GM12878 (cell line): ENCODE measurements at regions of chr2 and their contacts with region 1.

Region 1: DNA sequence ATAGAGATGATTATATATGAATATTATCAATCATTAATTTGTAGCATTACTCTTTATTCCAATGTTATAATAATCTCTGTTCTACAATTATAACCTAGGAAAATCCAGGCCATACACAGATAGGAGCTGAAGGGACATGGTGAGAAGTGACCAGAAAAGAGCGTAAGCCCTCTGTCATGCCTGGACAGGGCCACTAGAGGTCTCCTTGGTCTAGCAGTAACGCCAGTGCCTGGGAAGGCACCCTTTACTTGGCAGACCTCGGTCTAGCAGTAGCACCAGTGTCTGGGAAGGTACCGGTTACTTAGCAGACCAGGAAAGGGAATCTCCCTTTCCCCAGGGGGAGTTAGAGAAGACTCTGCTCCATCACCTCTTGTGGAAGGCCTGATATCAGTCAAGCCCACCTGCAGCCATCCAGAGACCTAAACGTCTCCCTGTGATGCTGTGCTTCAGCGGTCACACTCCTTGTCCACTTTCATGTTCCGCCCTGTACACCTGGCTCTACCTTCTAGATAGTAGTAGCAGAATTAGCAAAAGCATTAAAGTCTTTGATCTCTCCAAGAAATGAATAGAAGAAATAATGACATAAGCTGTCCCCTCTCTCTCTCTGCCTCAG is 447.5 kb upstream of the FSIP2 start:
- DNase-seq: no peak
- ATAC-seq: peak; percentile 98
- H3K4me3 ChIP-seq: no peak overlapping the region
- H3K27ac ChIP-seq: no peak overlapping the region
- H3K4me1 ChIP-seq: no peaks in the 10 kb centered on the region
- H3K27me3 ChIP-seq: no peaks in the 10 kb centered on the region
- CTCF ChIP-seq: peak; percentile 49 to 71 (median 61)
- EP300 ChIP-seq: no peak
- POLR2A ChIP-seq: no peak
- RAD21 ChIP-seq: peak; percentile 77

Region 2: DNA sequence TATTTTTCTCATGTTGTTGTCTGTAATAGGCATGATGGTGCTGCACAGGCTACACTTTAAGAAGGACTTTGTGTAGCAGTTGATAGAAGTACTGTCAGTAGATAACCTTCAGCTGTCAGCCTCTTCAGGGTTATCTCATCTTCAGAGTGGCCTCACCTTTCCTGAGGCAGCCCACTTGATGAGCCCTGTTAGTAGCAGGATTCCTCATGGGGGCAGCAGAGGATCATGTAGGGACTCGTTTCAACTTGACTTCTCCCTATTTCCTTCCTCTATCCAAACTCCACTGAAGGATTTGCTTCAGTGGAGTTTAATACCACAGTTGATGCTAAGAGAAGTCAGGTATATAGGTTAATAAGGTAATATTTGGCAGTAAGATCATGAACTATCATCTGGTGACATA is 82.9 kb before region 1 on chr2:
- CTCF ChIA-PET with region 1: interaction called, 9 read pairs
- POLR2A ChIA-PET with region 1: no interaction called
- RAD21 ChIA-PET with region 1: interaction called, 5 read pairs
- SMC1A ChIA-PET with region 1: interaction called, 18 read pairs
- in situ Hi-C with region 1: no loop called
- intact Hi-C with region 1: no loop called
- DNase-seq: no peak
- ATAC-seq: peak; percentile 76
- H3K4me3 ChIP-seq: no peak overlapping the region
- H3K27ac ChIP-seq: no peak overlapping the region
- H3K4me1 ChIP-seq: no peaks in the 10 kb centered on the region
- H3K27me3 ChIP-seq: no peaks in the 10 kb centered on the region
- CTCF ChIP-seq: peak; percentile 31 to 51 (median 46); a peak in 5 of 6 replicates
- EP300 ChIP-seq: no peak
- POLR2A ChIP-seq: no peak
- RAD21 ChIP-seq: peak; percentile 54

Region 3: GRCh38 chr2:185738679-185739472 is 447.7 kb after region 1 on chr2 and contains the start of gene FSIP2:
- CTCF ChIA-PET with region 1: interaction called, 9 read pairs
- POLR2A ChIA-PET with region 1: no interaction called
- RAD21 ChIA-PET with region 1: interaction called, 5 read pairs
- SMC1A ChIA-PET with region 1: interaction called, 3 read pairs
- in situ Hi-C with region 1: no loop called
- intact Hi-C with region 1: loop called (anchors 2 kb)
- DNase-seq: no peak
- ATAC-seq: peak; percentile 98
- H3K4me3 ChIP-seq: no peak within 1 kb of the TSS
- H3K27ac ChIP-seq: no peak within 1 kb of the TSS
- H3K4me1 ChIP-seq: no peaks in the 10 kb centered on the region
- H3K27me3 ChIP-seq: no peaks in the 10 kb centered on the region; a peak in 1 of 4 replicates
- CTCF ChIP-seq: peak; percentile 68 to 89 (median 77)
- EP300 ChIP-seq: no peak
- POLR2A ChIP-seq: no peak
- RAD21 ChIP-seq: peak; percentile 73
- polyA plus RNA-seq, gene FSIP2: 0.04 to 0.13 TPM

Region 4: GRCh38 chr2:186256540-186256939 is 965.4 kb after region 1 on chr2:
- CTCF ChIA-PET with region 1: no interaction called
- POLR2A ChIA-PET with region 1: no interaction called
- RAD21 ChIA-PET with region 1: no interaction called
- SMC1A ChIA-PET with region 1: interaction called, 4 read pairs
- in situ Hi-C with region 1: no loop called
- intact Hi-C with region 1: loop called (anchors 1 kb)
- DNase-seq: peak; percentile 7
- ATAC-seq: peak; percentile 86
- H3K4me3 ChIP-seq: no peak overlapping the region
- H3K27ac ChIP-seq: no peak overlapping the region
- H3K4me1 ChIP-seq: no peaks in the 10 kb centered on the region
- H3K27me3 ChIP-seq: no peaks in the 10 kb centered on the region
- CTCF ChIP-seq: peak; percentile 35 to 56 (median 51); a peak in 4 of 6 replicates
- EP300 ChIP-seq: no peak
- POLR2A ChIP-seq: no peak
- RAD21 ChIP-seq: peak; percentile 71